Posterior cingulate gyrus (tissue), 11 donors: ENCODE measurements at regions of chrX and their contacts with region 1.

Region 1: GRCh38 chrX:133171962-133172708 is 46.0 kb downstream of the TFDP3 start:
- DNase-seq: no peak

Region 2: GRCh38 chrX:132968296-132968949 is 203.7 kb before region 1 on chrX:
- intact Hi-C with region 1: loop called (anchors 10 kb)
- DNase-seq: no peak